ENCODE measurements at regions of chr5 and their contacts with region 1.

Region 1: DNA sequence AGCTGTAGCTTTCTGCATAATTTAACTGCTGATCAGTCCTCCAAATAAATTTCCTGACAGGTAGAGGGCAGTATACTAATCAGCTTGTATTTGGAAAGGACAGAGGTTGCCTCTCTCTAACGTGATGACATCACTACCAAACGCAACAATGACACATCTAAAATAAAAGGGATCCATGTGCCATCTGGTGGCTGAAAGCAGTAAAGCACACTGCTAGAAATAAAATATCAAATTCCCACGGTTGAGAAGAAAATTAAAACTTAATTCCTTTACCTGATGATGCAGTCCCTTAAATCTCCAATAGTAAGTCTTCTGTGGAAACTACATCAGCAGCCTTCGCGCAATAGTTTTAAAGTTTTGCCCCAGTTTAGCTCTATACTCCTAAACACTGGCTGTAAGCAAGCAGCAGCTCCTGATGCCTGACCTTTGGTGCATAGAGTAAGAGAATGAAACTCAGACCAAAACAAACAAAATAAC is 54.5 kb downstream of the DIAPH1 start:
- DNase-seq: peak in 2 of 3 donors; percentile 28 to 61
- ATAC-seq: peak; percentile 61 to 67
- H3K4me3 ChIP-seq: no peak overlapping the region
- H3K27ac ChIP-seq: peak overlapping the region; percentile 66
- H3K4me1 ChIP-seq: peaks cover 3% of the 10 kb centered on the region
- H3K27me3 ChIP-seq: no peaks in the 10 kb centered on the region

Region 2: GRCh38 chr5:141172378-141173204 is 391.7 kb before region 1 on chr5 and contains the start of gene PCDHB7:
- intact Hi-C with region 1: loop called in 1 of 4 experiments (anchors 10 kb)
- DNase-seq: no peak
- ATAC-seq: no peak
- H3K4me3 ChIP-seq: peak within 1 kb of the TSS; percentile 39
- H3K27ac ChIP-seq: no peak within 1 kb of the TSS
- H3K4me1 ChIP-seq: no peaks in the 10 kb centered on the region
- H3K27me3 ChIP-seq: no peaks in the 10 kb centered on the region
- total RNA-seq, gene PCDHB7: 0.79 to 1.7 (median 1.6) TPM

Region 3: DNA sequence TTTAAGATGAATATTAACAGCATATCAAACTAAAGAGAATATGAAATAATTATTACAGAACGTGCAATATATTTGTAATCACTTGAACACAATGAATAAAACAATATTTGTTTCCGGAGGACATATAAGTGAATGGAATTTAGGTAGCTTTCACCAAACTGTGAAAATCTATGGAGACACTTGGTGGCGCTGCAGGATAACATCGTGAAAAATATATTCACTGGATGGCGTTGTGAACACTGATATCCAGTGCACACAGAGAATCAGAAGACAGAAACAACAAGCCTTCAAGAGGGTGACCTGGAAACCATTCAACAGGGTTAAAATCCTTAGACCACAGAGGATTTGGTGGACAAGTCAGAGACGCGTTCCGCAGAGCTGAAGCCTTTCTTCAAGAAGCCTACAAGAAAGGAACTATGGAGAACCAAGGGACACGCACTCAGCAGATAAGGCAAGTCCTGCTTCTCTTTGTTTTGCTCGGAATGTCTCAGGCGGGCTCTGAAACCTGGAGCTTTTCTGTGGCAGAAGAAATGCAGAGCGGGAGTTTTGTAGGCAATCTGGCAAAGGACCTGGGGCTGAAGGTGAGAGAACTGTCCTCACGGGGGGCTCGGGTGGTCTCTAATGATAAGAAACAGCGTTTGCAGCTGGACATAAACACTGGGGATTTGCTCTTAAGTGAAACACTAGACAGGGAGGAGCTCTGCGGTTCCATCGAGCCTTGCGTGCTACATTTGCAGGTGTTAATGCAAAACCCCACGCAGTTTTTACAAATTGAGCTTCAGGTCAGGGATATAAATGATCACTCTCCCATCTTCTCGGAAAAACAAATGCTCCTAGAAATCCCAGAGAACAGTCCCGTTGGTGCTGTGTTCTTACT is 364.7 kb before region 1 on chr5 and contains the start of gene PCDHB11:
- intact Hi-C with region 1: loop called in 2 of 4 experiments (anchors 10 kb)
- DNase-seq: no peak
- ATAC-seq: no peak
- H3K4me3 ChIP-seq: no peak within 1 kb of the TSS
- H3K27ac ChIP-seq: no peak within 1 kb of the TSS
- H3K4me1 ChIP-seq: no peaks in the 10 kb centered on the region
- H3K27me3 ChIP-seq: no peaks in the 10 kb centered on the region
- total RNA-seq, gene PCDHB11: 1.9 to 2.9 (median 2.5) TPM

Region 4: GRCh38 chr5:141223112-141223783 is 341.0 kb before region 1 on chr5 and contains the start of gene PCDHB14:
- intact Hi-C with region 1: loop called in 2 of 4 experiments (anchors 10 kb)
- DNase-seq: no peak
- ATAC-seq: no peak
- H3K4me3 ChIP-seq: peak within 1 kb of the TSS; percentile 43
- H3K27ac ChIP-seq: no peak within 1 kb of the TSS
- H3K4me1 ChIP-seq: no peaks in the 10 kb centered on the region
- H3K27me3 ChIP-seq: no peaks in the 10 kb centered on the region
- total RNA-seq, gene PCDHB14: 4.3 to 5.9 (median 5.3) TPM

Region 5: GRCh38 chr5:141326088-141326854 is 238.0 kb before region 1 on chr5:
- intact Hi-C with region 1: loop called in 2 of 4 experiments (anchors 5 to 10 kb)
- DNase-seq: peak; percentile 59 to 83 (median 77)
- ATAC-seq: peak; percentile 77 to 93
- H3K4me3 ChIP-seq: peak overlapping the region; percentile 46
- H3K27ac ChIP-seq: peak overlapping the region; percentile 55
- H3K4me1 ChIP-seq: no peaks in the 10 kb centered on the region
- H3K27me3 ChIP-seq: no peaks in the 10 kb centered on the region

Region 6: DNA sequence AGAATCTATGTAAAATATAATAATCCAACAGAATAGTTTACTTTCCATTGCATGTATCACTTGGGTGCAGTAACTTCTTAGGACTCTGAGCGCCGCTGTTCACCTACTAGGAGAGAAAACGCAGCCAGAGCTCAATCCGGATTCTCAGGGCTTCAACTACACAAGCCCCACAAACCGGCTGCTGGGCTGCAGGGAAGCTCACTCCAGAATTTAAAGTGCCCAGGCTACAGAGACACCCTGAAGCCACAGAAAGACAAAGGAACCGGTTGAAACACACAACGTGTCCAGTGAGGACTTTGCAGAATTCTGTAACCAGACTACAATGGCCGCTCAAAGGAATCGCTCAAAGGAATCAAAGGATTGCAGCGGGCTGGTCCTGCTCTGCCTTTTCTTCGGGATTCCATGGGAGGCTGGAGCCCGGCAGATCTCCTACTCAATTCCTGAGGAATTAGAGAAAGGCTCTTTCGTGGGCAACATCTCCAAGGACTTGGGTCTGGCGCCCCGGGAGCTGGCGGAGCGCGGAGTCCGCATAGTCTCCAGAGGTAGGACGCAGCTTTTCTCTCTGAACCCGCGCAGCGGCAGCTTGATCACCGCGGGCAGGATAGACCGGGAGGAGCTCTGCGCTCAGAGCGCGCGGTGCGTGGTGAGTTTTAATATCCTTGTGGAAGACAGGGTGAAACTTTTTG is 151.3 kb before region 1 on chr5 and contains the start of gene PCDHGA10:
- intact Hi-C with region 1: loop called in 2 of 4 experiments (anchors 5 kb)
- DNase-seq: no peak
- ATAC-seq: peak in 1 of 2 donors; percentile 50
- H3K4me3 ChIP-seq: peak within 1 kb of the TSS; percentile 32
- H3K27ac ChIP-seq: no peak within 1 kb of the TSS
- H3K4me1 ChIP-seq: no peaks in the 10 kb centered on the region
- H3K27me3 ChIP-seq: no peaks in the 10 kb centered on the region
- total RNA-seq, gene PCDHGA10: 3.9 to 5.3 (median 4.5) TPM